ENCODE measurements at regions of chr16 and their contacts with region 1.

Region 1: GRCh38 chr16:81873843-81874752 is 95.0 kb downstream of the PLCG2 start:
- DNase-seq: peak in 1 of 2 experiments; percentile 80
- H3K4me3 ChIP-seq: no peak overlapping the region
- H3K27ac ChIP-seq: 0 out of 2 replicates have a peak overlapping the region, but pooled peaks have one; percentile 4
- H3K4me1 ChIP-seq: peaks cover 2 to 14% (median 10%) of the 10 kb centered on the region in 4 experiments
- H3K27me3 ChIP-seq: no peaks in the 10 kb centered on the region
- CTCF ChIP-seq: peak; percentile 74 to 94 (median 79)
- EP300 ChIP-seq: no peak
- POLR2A ChIP-seq: no peak
- RAD21 ChIP-seq: peak; percentile 68 to 75

Region 2: GRCh38 chr16:81737885-81738786 is 136.0 kb before region 1 on chr16:
- CTCF ChIA-PET with region 1: interaction called, 17 read pairs
- POLR2A ChIA-PET with region 1: no interaction called
- DNase-seq: peak; percentile 73 to 92
- H3K4me3 ChIP-seq: 0 out of 8 replicates have a peak overlapping the region, but pooled peaks of 1 of the 4 experiments have one; percentile 30
- H3K27ac ChIP-seq: no peak overlapping the region
- H3K4me1 ChIP-seq: peaks cover 0 to 2% (median 0%) of the 10 kb centered on the region in 4 experiments; a peak in 3 of 7 replicates
- H3K27me3 ChIP-seq: no peaks in the 10 kb centered on the region
- CTCF ChIP-seq: peak; percentile 88 to 95 (median 89)
- EP300 ChIP-seq: peak in 1 of 2 experiments; percentile 71; a peak in 1 of 3 replicates
- POLR2A ChIP-seq: no peak
- RAD21 ChIP-seq: peak; percentile 96 to 98

Region 3: DNA sequence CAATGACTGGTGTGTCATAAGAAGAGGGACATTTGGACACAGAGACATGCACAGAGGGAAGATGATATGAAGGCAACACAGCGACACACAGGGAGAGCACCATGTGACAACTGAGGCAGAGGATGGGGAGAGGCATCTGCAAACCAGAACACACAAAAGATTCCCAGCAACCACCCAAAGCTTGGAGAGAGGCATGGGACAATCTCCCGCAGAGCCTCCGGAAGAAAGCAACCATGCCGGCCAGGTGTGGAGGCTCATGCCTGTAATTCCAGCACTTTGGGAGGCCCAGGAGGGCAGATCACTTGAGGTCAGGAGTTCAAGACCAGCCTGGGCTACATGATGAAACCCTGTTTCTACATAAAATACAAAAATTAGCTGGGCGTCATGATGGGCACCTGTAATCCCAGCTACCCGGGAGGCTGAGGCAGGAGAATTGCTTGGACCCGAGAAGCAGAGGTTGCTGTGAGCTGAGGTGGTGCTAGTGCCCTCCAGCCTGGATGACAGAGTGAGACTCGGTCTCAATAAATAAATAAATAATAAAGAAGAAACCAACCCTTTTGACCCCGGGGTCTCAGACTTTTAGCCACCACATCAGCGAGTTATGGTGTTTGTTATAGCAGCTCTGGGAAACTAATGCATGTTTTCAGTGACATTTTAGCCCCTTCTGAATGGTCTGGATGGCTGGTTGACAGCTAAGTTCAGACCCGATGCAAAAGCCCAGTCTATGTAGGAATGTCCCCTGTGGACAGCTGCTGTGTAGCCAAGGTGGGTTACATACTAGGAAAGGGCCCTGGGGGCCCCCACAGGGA is 108.8 kb before region 1 on chr16:
- CTCF ChIA-PET with region 1: interaction called, 16 read pairs
- POLR2A ChIA-PET with region 1: no interaction called
- DNase-seq: no peak
- H3K4me3 ChIP-seq: no peak overlapping the region
- H3K27ac ChIP-seq: no peak overlapping the region
- H3K4me1 ChIP-seq: no peaks in the 10 kb centered on the region
- H3K27me3 ChIP-seq: no peaks in the 10 kb centered on the region
- CTCF ChIP-seq: no peak
- EP300 ChIP-seq: no peak
- POLR2A ChIP-seq: no peak
- RAD21 ChIP-seq: no peak

Region 4: DNA sequence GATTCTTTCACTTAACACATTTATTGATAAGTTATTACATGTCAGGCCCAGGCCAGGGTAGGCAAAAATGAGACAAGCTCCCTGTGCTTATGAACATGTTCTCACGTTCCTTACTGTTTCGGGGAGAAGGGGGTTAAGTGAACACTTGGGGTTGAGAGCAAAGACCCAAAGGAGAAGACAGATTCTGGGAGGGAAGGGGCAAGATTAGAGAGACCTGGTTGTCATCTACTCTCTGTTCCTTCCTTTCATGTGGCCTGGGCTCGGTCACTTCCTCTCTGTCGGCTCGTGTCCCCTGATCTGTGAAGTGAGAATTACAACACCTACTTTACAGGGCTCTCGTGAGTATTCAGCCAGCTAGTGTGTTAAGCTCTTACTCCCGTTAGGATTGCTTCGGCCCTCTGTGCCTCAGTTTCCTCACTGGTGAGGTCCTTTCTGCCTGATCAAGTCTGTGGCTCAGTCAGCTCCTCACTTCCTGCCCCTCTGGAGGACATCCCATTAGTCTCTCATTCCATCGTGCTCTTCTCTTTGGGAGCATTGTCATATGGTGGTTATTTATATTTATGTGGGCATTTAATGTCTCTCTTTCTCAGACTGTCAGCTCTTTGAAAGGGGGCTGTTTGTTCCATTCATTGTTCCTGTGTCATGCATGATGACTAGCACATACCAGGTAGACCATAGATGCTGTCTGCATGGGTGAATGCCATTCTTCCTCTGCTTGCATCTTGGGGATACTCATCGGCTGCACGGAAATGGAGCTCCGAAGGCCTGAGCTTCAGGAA is 56.1 kb before region 1 on chr16:
- CTCF ChIA-PET with region 1: interaction called, 10 read pairs
- POLR2A ChIA-PET with region 1: no interaction called
- DNase-seq: no peak
- H3K4me3 ChIP-seq: no peak overlapping the region
- H3K27ac ChIP-seq: no peak overlapping the region
- H3K4me1 ChIP-seq: peaks cover 7 to 13% (median 7%) of the 10 kb centered on the region in 4 experiments; a peak in 4 of 7 replicates
- H3K27me3 ChIP-seq: no peaks in the 10 kb centered on the region; a peak in 1 of 7 replicates
- CTCF ChIP-seq: no peak
- EP300 ChIP-seq: no peak
- POLR2A ChIP-seq: no peak
- RAD21 ChIP-seq: no peak

Region 5: DNA sequence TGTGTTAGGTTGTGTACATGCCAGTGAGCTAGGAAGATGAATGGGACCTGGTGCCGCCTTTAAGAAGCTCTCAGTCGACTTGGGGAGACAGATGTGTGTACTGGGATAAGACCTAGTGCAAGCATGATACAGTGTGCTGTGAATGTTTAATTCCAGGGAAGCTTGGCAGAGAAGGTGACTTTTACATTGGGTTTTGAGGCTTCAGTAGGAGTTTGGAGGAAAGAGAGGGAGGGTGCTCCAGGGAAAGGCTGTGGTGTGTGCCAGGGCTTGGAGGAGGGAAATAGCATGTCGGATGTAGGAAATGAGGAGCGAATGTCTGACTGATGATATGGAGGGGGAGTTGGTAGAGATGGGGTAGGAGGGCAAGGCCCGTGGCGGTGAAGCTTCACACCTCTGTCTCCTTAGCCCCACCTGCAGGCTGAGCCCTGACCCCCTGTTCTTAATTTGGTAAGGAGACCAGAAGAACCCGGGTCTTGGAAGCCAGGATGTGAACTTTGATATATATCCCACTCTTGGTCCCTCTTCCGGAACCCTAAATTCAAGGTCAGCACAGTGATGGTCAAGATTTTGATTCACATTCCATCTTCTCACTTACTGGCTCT is 18.4 kb before region 1 on chr16:
- CTCF ChIA-PET with region 1: interaction called, 78 read pairs
- POLR2A ChIA-PET with region 1: interaction called, 3 read pairs
- DNase-seq: no peak
- H3K4me3 ChIP-seq: no peak overlapping the region
- H3K27ac ChIP-seq: no peak overlapping the region
- H3K4me1 ChIP-seq: no peaks in the 10 kb centered on the region
- H3K27me3 ChIP-seq: no peaks in the 10 kb centered on the region
- CTCF ChIP-seq: peak; percentile 28 to 60 (median 49); a peak in 3 of 4 replicates
- EP300 ChIP-seq: no peak
- POLR2A ChIP-seq: no peak
- RAD21 ChIP-seq: peak; percentile 50 to 66

Region 6: GRCh38 chr16:81885976-81886586 is 12.0 kb after region 1 on chr16:
- CTCF ChIA-PET with region 1: interaction called, 77 read pairs
- POLR2A ChIA-PET with region 1: no interaction called
- DNase-seq: peak; percentile 36 to 77
- H3K4me3 ChIP-seq: no peak overlapping the region
- H3K27ac ChIP-seq: no peak overlapping the region
- H3K4me1 ChIP-seq: peaks cover 0 to 3% (median 1%) of the 10 kb centered on the region in 4 experiments; a peak in 1 of 7 replicates
- H3K27me3 ChIP-seq: no peaks in the 10 kb centered on the region
- CTCF ChIP-seq: peak; percentile 58 to 77 (median 75)
- EP300 ChIP-seq: no peak
- POLR2A ChIP-seq: no peak
- RAD21 ChIP-seq: peak; percentile 60 to 71

Measured in H1 (cell line).